ENCODE measurements at regions of chr2 and their contacts with region 1.

Region 1: GRCh38 chr2:42095923-42096408 is 48.1 kb downstream of the PKDCC start:
- DNase-seq: no peak
- H3K4me3 ChIP-seq: no peak overlapping the region
- CTCF ChIP-seq: peak; percentile 63

Region 2: GRCh38 chr2:41853427-41854216 is 242.3 kb before region 1 on chr2:
- CTCF ChIA-PET with region 1: interaction called, 801 read pairs
- POLR2A ChIA-PET with region 1: no interaction called
- DNase-seq: no peak
- H3K4me3 ChIP-seq: no peak overlapping the region
- CTCF ChIP-seq: peak; percentile 53

Region 3: GRCh38 chr2:42010810-42011209 is 85.2 kb before region 1 on chr2:
- CTCF ChIA-PET with region 1: no interaction called
- POLR2A ChIA-PET with region 1: no interaction called
- DNase-seq: peak; percentile 57
- H3K4me3 ChIP-seq: no peak overlapping the region
- CTCF ChIP-seq: no peak

Region 4: DNA sequence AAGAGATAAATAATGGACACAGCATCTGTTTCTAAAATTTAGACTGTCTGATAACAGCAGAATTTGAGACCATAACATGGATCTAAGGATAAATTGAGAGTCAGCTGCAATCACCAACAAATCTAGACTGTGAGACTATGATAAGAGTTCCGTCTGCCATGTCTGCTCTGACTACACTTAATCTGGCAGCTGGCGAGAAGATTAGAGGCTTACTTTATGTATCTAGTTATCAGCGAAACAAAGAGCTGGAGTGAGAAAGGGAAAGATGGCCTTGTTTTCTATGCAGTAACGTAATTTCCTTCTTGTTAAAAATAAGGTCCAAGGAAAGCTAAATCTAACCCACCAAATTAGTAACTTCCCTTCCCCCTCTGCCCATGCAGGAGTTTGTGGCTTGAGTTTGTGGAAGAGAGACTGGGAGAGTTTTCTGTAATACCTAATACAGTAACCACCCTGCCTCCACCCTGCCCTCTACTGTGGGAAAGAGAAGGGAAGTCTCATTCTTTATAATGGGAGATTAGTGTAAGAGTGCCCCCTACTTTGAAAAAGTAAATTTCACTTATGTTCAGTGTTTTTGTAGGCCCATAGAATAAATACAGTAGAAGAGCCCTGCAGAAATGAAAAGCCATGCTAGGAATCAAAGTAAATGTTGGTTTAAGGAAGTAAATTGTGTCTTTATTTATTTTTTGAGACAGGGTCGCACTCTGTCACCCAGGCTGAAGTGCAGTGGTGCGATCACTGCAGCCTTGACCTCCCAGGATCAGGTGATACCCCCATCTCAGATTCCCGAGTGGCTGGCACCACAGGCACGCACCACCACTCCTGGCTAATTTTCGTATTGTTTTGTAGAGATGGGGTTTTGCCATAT is 100.7 kb after region 1 on chr2:
- CTCF ChIA-PET with region 1: interaction called, 26 read pairs
- POLR2A ChIA-PET with region 1: no interaction called
- DNase-seq: no peak
- H3K4me3 ChIP-seq: no peak overlapping the region
- CTCF ChIP-seq: peak; percentile 28

Region 5: DNA sequence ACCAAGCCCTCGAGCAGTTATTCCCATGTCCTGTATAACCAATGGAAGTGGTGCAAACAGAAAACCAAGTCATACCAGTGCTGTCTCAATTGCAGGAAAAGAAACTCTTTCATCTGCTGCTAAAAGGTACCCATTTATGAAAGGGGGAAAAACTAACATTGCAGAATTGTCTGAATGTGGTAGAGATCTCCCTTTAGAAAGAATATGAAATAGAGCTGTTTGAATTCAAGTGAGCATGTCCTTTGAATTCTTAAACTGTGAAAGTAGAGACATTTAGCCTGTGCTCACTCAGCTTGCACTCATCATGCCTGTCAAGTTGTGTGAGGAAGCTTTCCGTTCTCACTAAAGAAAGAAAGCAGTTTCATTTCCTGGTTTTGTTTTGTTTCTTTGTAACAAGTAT is 160.5 kb after region 1 on chr2:
- CTCF ChIA-PET with region 1: no interaction called
- POLR2A ChIA-PET with region 1: no interaction called
- DNase-seq: no peak
- H3K4me3 ChIP-seq: no peak overlapping the region
- CTCF ChIP-seq: no peak

Region 6: DNA sequence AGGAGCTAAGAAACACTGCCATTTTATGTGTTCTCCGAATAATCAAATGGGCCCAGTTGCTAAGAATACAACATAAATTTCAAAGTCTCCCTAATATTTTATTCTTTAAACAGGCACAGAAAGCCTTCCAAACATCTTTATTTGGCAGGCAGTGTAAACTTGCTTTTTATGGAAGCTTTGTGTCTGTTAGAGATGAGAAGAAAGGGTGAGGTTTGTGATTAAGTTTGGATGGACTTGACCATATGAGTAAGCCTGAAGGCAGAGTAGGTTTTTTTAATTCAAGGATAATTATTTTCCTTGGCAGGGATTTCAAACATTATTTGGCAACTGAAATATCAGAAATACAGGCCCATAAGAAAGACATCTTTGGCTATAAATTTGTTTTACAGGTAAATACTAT is 202.2 kb after region 1 on chr2:
- CTCF ChIA-PET with region 1: interaction called, 10 read pairs
- POLR2A ChIA-PET with region 1: no interaction called
- DNase-seq: no peak
- H3K4me3 ChIP-seq: no peak overlapping the region
- CTCF ChIP-seq: no peak

Region 7: DNA sequence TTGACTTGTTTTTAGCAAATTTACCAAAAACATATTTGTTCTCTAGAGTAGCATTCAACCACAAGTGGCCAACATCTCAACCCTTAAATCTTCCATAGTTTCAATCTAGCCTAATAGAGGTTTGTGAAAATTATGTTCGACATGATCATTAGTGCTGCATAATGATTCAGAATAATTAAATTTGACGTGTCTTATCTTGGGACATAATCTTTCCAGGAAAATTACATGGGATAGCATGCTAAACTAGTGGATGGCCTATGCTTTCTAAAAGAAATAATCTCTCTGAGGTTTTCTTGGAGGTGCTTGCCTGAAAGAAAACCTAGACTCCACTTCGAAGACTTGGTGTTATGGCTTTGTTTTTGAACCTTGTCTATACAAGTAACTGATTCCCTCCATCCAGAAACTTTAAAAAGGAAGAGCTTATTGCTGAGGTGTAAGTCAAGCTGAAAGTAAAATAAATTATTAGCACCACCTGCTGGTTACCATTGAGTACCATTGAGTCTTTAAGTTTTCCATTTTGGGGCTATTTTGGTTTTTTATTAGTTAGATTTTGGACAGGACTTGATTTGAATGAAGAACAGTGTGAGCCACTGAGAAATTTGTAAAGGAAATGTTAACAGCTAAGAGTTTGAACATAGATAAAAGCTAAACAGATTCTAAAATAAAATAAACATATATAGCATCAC is 232.3 kb after region 1 on chr2:
- CTCF ChIA-PET with region 1: interaction called, 160 read pairs
- POLR2A ChIA-PET with region 1: no interaction called
- DNase-seq: no peak
- H3K4me3 ChIP-seq: no peak overlapping the region
- CTCF ChIP-seq: peak; percentile 8

Region 8: DNA sequence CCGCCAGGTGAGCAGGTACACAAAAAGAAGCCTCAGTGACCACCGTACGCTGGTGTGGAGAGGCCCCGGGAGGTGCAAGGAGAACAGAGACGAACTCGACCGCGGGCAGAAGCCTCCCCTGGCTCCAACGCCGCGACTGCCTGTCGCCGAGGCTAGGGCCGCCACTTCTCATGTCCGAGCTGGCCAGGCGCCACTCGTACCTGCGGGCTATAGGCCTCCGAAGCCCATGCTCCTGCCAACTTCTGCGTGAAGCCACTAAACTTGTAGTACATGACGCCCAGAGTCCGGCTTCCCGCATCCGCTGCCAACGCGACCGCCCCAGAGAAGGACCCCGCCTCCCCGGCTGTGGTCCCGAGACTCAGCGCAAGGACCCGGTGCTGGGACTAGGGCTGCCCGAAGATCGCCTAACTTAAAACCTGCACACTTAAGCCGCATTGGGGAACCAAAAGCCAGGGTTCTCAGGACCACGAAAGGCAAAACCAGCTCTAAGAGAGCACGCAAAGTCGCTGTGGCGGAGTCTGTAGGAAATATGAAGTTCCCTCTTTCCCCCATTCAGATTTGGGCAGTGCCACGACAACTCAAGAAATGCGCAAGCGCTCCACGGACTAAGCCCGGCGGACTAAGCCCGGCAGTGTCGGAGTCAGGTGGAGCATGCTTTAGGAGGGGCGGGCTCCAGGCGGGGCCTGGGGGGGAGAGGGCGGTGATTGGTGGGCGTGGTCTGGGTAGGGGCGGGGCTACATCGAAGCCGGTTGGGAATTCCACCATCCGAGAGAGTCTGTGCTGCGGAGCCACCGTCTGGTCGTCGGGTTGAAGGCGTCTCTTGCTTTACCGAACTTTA is 265.1 kb after region 1 on chr2 and contains the start of gene COX7A2L:
- CTCF ChIA-PET with region 1: interaction called, 32 read pairs
- POLR2A ChIA-PET with region 1: no interaction called
- DNase-seq: peak; percentile 82
- H3K4me3 ChIP-seq: peak within 1 kb of the TSS; percentile 100
- CTCF ChIP-seq: peak; percentile 40